ENCODE measurements at regions of chr1 and their contacts with region 1.

Region 1: GRCh38 chr1:70487910-70488665 is 77.0 kb downstream of the CTH start:
- DNase-seq: peak in 2 of 9 experiments; percentile 35 to 44
- ATAC-seq: no peak
- H3K4me3 ChIP-seq: no peak overlapping the region
- H3K4me3 Mint-ChIP-seq: no peak overlapping the region
- H3K27ac ChIP-seq: no peak overlapping the region
- H3K27ac Mint-ChIP-seq: no peak overlapping the region
- H3K4me1 ChIP-seq: no peaks in the 10 kb centered on the region
- H3K4me1 Mint-ChIP-seq: no peaks in the 10 kb centered on the region
- H3K27me3 ChIP-seq: no peaks in the 10 kb centered on the region
- H3K27me3 Mint-ChIP-seq: peaks cover 12% of the 10 kb centered on the region
- CTCF ChIP-seq: peak; percentile 25

Region 2: DNA sequence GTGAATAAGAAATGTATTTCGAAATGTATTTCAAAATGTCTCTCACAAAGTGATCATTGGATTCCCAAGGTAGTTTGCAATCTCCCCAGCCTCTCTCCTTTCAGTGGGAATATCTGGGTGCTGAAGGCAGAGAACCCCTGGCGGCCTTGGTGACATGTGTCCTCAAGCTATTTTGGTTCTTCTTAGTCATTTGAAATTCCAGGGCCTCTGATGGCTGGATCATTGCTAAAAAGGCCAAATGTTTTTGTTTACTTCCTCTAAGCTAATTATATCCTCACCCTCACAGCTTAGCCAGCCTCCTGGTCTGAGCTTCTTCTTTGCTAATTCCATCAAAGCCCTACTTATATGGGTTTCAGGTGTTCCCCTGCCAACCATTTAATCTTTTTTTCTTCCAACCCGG is 353.9 kb before region 1 on chr1:
- CTCF ChIA-PET with region 1: interaction called, 3 read pairs
- POLR2A ChIA-PET with region 1: no interaction called
- intact Hi-C with region 1: loop called in 1 of 2 experiments (anchors 1 kb)
- DNase-seq: no peak
- ATAC-seq: no peak
- H3K4me3 ChIP-seq: no peak overlapping the region
- H3K4me3 Mint-ChIP-seq: no peak overlapping the region
- H3K27ac ChIP-seq: no peak overlapping the region
- H3K27ac Mint-ChIP-seq: no peak overlapping the region
- H3K4me1 ChIP-seq: no peaks in the 10 kb centered on the region
- H3K4me1 Mint-ChIP-seq: peaks cover 3% of the 10 kb centered on the region
- H3K27me3 ChIP-seq: no peaks in the 10 kb centered on the region
- H3K27me3 Mint-ChIP-seq: peaks cover 6% of the 10 kb centered on the region
- CTCF ChIP-seq: no peak

Region 3: DNA sequence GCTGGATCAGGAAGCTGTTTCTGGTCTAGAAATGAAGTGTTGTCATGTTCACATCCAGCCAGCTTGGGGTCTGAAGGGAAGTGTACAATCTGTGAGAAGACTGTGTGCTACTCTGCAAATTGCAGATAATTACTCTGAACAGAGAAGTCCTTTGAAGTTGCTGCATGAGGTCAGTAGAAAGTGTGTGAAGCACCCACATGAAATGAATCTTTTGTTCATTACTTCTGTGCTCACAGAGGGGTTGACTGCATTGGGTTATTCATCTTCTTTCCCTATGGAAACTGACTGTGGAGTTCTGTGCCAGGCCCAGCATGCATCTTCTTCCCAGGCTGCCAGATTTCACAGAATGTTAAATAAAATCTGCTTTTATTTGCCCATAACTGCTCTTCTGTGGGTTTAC is 30.0 kb before region 1 on chr1:
- CTCF ChIA-PET with region 1: no interaction called
- POLR2A ChIA-PET with region 1: no interaction called
- intact Hi-C with region 1: no loop called
- DNase-seq: no peak
- ATAC-seq: no peak
- H3K4me3 ChIP-seq: no peak overlapping the region
- H3K4me3 Mint-ChIP-seq: no peak overlapping the region
- H3K27ac ChIP-seq: no peak overlapping the region
- H3K27ac Mint-ChIP-seq: no peak overlapping the region
- H3K4me1 ChIP-seq: no peaks in the 10 kb centered on the region
- H3K4me1 Mint-ChIP-seq: no peaks in the 10 kb centered on the region
- H3K27me3 ChIP-seq: no peaks in the 10 kb centered on the region
- H3K27me3 Mint-ChIP-seq: peaks cover 4% of the 10 kb centered on the region
- CTCF ChIP-seq: no peak

Region 4: DNA sequence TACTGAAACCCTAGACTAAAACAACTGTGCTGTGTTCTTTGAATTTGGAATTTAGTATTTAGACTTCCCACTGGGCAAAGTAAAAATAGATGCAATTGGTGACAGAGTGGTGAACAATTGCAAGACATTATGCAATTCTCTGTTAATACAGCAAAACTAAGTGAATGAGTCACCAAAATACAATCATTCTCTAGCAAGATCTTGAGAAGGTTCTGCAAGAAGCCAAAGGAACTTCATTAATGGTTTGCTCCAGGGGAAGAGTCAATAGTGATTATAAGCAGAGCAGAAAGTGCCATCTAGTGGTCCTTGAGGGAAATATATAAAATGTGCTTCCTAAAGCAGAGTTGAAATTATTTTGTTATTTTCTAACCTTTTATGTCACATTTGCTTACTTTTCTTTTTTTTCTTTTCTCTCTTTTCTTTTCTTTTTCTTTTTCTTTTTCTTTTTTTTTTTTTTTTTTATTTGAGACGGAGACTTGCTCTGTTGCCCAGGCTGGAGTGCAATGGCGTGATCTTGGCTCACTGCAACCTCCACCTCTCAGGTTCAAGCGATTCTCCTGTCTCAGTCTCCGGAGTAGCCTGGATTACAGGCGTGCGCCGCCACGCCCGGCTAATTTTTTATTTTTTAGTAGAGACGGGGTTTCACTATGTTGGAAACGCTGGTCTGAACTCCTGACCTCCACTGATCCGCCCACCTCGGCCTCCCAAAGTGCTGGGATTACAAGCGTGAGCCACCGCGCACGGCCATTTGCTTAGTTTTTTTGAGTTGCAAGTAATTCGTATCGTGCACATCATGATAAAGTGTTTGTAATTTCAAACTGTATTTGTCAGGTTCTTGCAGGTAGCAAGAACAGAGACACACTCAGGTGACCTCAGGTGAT is 22.1 kb after region 1 on chr1:
- CTCF ChIA-PET with region 1: no interaction called
- POLR2A ChIA-PET with region 1: no interaction called
- intact Hi-C with region 1: no loop called
- DNase-seq: peak in 2 of 9 experiments; percentile 56 to 68
- ATAC-seq: peak; percentile 69
- H3K4me3 ChIP-seq: no peak overlapping the region
- H3K4me3 Mint-ChIP-seq: no peak overlapping the region
- H3K27ac ChIP-seq: no peak overlapping the region
- H3K27ac Mint-ChIP-seq: no peak overlapping the region
- H3K4me1 ChIP-seq: no peaks in the 10 kb centered on the region
- H3K4me1 Mint-ChIP-seq: no peaks in the 10 kb centered on the region
- H3K27me3 ChIP-seq: no peaks in the 10 kb centered on the region
- H3K27me3 Mint-ChIP-seq: peaks cover 18% of the 10 kb centered on the region
- CTCF ChIP-seq: peak; percentile 83